Activated CD4-positive, alpha-beta T cell treated with anti-CD3 and anti-CD28 coated beads for 36 hours (primary cell): ENCODE measurements at regions of chr2 and their contacts with region 1.

Region 1: DNA sequence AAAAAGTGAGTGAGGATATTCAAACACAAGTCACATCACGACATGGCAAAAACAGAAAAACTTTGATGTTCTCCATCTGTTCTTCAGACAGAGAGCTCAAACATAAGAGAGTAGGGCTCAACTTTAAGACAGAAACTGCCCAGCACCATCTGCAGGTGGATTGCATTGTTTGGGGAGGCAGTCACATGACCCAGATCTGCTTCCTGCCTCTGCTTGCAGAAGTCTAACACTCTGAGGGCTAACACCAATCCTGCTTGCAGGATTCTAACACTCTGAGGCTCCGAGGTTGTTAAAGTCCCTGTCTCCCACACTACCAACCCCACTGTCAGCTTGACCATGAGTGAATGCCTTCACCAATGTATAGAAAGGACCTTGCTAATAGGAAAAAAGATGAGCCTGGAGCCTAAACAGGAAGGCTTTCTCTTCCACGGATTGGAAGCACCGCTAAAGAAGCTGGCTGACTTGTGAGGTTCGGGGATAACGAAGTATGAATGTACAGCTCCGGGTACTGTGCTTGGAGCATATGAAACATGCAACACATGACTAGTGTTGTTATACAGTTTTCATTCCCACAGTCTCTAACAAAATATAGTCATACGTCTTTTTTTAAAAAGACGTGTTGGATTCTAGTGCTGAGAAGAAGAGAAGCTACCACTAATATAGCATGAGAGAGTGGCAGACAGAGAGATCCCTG is 176.6 kb upstream of the CREB1 start:
- DNase-seq: peak; percentile 46
- ATAC-seq: peak; percentile 74
- H3K4me3 Mint-ChIP-seq: no peak overlapping the region
- H3K27ac Mint-ChIP-seq: no peak overlapping the region
- H3K4me1 Mint-ChIP-seq: peaks cover 8% of the 10 kb centered on the region
- H3K27me3 Mint-ChIP-seq: peaks cover 2% of the 10 kb centered on the region

Region 2: DNA sequence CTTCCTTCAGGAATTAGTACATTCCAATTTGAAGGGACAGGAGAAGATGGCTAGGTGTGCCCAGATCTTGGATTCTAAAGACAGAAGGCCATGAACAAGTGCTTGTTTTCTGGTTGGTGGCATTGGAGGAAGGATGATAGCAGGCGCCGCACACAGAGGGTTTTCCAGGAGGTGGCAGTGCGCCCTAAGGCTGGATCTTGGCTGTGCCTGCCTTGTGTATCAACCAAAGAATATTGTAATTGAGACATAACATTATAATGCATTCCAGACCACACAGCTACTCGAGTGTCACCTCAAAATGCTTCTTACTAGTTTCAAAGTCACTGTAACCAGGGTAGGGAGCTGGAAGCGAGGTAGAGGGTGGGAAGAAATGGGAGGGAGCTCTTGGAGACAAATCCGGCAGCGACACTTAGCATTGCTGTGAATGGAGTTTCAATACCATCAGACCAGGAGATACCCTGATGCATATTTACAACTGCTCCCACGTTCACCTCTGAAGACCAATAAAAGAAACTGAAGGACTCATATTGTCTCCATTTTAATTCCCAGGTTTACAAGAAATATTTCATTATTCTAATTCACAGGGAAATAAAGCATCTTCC is 371.3 kb before region 1 on chr2:
- CTCF ChIA-PET with region 1: no interaction called
- POLR2A ChIA-PET with region 1: no interaction called
- intact Hi-C with region 1: loop called in 1 of 2 experiments (anchors 10 kb)
- DNase-seq: peak; percentile 76
- ATAC-seq: peak; percentile 80
- H3K4me3 Mint-ChIP-seq: no peak overlapping the region
- H3K27ac Mint-ChIP-seq: no peak overlapping the region
- H3K4me1 Mint-ChIP-seq: peaks cover 19% of the 10 kb centered on the region
- H3K27me3 Mint-ChIP-seq: no peaks in the 10 kb centered on the region

Region 3: GRCh38 chr2:207188626-207189419 is 164.3 kb before region 1 on chr2:
- CTCF ChIA-PET with region 1: no interaction called
- POLR2A ChIA-PET with region 1: no interaction called
- intact Hi-C with region 1: no loop called
- DNase-seq: no peak
- ATAC-seq: no peak
- H3K4me3 Mint-ChIP-seq: no peak overlapping the region
- H3K27ac Mint-ChIP-seq: no peak overlapping the region
- H3K4me1 Mint-ChIP-seq: peaks cover 12% of the 10 kb centered on the region
- H3K27me3 Mint-ChIP-seq: no peaks in the 10 kb centered on the region